Panc1 (cell line): ENCODE measurements at regions of chr7 and their contacts with region 1.

Region 1: GRCh38 chr7:2072042-2072441 is 160.7 kb downstream of the MAD1L1 start:
- DNase-seq: no peak
- ATAC-seq: no peak
- H3K4me3 ChIP-seq: no peak overlapping the region
- H3K27ac ChIP-seq: no peak overlapping the region
- H3K4me1 ChIP-seq: no peaks in the 10 kb centered on the region
- H3K27me3 ChIP-seq: no peaks in the 10 kb centered on the region
- CTCF ChIP-seq: no peak

Region 2: GRCh38 chr7:2037808-2038522 is 34.1 kb before region 1 on chr7:
- CTCF ChIA-PET with region 1: no interaction called
- POLR2A ChIA-PET with region 1: no interaction called
- in situ Hi-C with region 1: loop called (anchors 5 kb)
- intact Hi-C with region 1: no loop called
- DNase-seq: no peak
- ATAC-seq: no peak
- H3K4me3 ChIP-seq: no peak overlapping the region
- H3K27ac ChIP-seq: no peak overlapping the region
- H3K4me1 ChIP-seq: no peaks in the 10 kb centered on the region
- H3K27me3 ChIP-seq: no peaks in the 10 kb centered on the region
- CTCF ChIP-seq: no peak